ENCODE measurements at regions of chr1 and their contacts with region 1.

Region 1: DNA sequence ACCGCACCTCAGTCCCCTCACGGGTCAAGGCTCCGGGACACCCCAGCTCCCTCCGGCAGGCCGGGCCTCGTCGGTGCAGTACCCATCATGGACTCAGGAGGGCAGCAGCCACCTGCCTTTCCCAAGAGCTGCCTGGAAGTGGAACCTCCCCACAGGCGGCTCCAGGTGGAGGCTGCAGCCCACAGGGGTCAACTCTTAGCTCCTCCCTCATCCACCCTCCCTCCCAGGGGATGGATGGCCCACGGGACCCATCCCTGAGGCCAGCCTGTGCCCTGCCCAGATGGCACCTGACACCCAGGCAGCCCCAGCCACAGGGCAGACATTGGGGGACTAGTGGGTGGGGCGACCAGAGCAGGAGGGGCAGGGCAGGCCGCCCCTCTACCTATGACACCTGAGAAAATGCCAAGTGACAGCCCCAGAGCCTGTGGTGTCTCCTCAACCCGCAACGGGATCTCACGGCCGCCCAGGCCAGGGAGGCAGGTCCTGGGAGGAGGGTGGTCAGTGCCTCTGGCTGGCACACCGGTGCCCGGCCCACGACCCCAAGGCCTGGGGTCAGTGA is 1.2 kb upstream of the ARHGEF16 start:
- DNase-seq: peak; percentile 78
- H3K4me3 ChIP-seq: no peak overlapping the region
- H3K27ac ChIP-seq: no peak overlapping the region
- H3K4me1 ChIP-seq: peaks cover 17% of the 10 kb centered on the region
- H3K27me3 ChIP-seq: no peaks in the 10 kb centered on the region
- CTCF ChIP-seq: peak; percentile 91

Region 2: GRCh38 chr1:3471302-3472087 is 18.2 kb after region 1 on chr1:
- CTCF ChIA-PET with region 1: interaction called, 27 read pairs
- POLR2A ChIA-PET with region 1: no interaction called
- intact Hi-C with region 1: no loop called
- DNase-seq: peak; percentile 78
- H3K4me3 ChIP-seq: peak overlapping the region; percentile 22
- H3K27ac ChIP-seq: peak overlapping the region; percentile 80
- H3K4me1 ChIP-seq: peaks cover 37% of the 10 kb centered on the region
- H3K27me3 ChIP-seq: no peaks in the 10 kb centered on the region
- CTCF ChIP-seq: peak; percentile 62

Region 3: DNA sequence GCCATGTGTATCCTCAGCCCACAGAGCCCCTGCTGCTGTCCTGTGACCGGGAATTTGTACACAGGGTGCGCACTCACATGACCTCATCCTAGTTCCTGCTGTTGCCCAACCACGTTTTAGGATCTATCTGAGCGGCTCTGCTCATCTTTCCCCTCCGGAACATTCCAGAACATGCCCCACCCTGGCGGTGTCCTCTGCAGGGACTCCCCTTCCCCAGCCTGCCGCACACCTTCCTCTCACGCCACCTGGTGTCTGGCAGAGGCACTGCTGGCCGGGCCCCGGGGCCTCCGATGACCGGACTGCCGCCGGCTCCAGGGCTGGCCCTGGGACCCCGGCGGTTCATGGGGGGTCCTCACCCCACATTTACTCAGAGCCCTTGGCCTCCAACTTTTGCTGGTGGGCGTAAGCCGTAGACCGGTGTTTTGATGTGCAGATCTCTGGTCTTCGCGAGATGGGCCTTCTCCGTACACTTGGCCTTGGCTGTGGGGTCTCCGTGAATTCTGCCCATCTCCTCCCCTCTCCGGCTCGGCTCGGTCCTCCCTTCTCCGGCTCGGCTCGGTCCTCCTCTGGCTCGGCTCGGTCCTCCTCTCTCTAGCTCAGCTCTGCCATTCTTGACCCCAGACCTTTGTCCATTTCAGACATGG is 30.6 kb after region 1 on chr1:
- CTCF ChIA-PET with region 1: interaction called, 23 read pairs
- POLR2A ChIA-PET with region 1: no interaction called
- intact Hi-C with region 1: loop called (anchors 1 kb)
- DNase-seq: peak; percentile 53
- H3K4me3 ChIP-seq: no peak overlapping the region
- H3K27ac ChIP-seq: no peak overlapping the region
- H3K4me1 ChIP-seq: no peaks in the 10 kb centered on the region
- H3K27me3 ChIP-seq: no peaks in the 10 kb centered on the region
- CTCF ChIP-seq: peak; percentile 93

Region 4: GRCh38 chr1:3491291-3492246 is 38.3 kb after region 1 on chr1:
- CTCF ChIA-PET with region 1: interaction called, 13 read pairs
- POLR2A ChIA-PET with region 1: no interaction called
- intact Hi-C with region 1: no loop called
- DNase-seq: peak; percentile 79
- H3K4me3 ChIP-seq: no peak overlapping the region
- H3K27ac ChIP-seq: no peak overlapping the region
- H3K4me1 ChIP-seq: no peaks in the 10 kb centered on the region
- H3K27me3 ChIP-seq: no peaks in the 10 kb centered on the region
- CTCF ChIP-seq: peak; percentile 98

Region 5: GRCh38 chr1:3618881-3619671 is 165.8 kb after region 1 on chr1:
- CTCF ChIA-PET with region 1: interaction called, 42 read pairs
- POLR2A ChIA-PET with region 1: no interaction called
- intact Hi-C with region 1: loop called (anchors 2 kb)
- DNase-seq: peak; percentile 87
- H3K4me3 ChIP-seq: no peak overlapping the region
- H3K27ac ChIP-seq: no peak overlapping the region
- H3K4me1 ChIP-seq: peaks cover 5% of the 10 kb centered on the region
- H3K27me3 ChIP-seq: no peaks in the 10 kb centered on the region
- CTCF ChIP-seq: peak; percentile 91

Region 6: DNA sequence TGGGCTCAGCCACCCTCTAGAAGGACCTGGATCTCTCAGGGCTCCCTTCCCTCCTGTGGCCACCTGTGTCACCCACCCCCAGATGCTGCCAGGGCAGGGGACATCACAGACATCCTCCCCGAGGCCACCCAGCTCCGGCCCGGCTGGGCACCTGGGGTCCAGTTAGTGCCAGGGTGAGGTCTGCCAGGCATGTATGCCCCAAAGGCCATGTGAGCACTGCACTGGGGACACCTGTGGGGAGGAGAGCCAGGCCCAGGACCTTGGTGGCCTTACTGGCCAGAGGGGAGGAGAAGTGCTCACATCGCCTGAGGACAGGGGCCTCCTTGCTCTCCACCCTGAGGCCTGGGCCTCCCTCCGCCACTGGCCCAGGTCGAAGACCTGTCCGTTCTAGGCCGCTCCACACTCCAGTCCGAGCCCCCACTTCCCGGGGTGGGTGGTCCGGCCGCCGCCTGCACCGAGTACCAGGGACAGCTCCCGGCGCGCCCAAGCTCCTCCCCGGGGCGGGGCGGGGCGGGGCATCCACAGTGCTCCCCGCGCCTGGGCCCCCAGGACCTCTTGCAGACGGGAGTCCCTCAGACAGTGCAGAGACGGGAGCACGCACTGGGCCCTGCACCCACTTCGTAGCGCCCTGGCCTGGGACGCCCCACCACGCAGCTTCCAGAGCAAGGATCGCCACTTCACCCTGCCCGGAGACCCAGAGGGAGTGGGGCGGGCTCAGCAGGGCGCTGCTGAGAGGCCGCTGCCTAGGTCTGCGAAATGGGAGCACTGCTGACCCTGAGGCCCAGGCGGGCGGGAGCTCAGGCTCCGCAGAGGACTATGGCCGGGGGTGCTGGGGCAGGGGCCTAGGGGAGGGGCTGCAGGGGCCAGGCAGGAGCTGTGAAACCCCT is 264.7 kb after region 1 on chr1:
- CTCF ChIA-PET with region 1: no interaction called
- POLR2A ChIA-PET with region 1: no interaction called
- intact Hi-C with region 1: loop called (anchors 5 kb)
- DNase-seq: peak; percentile 54
- H3K4me3 ChIP-seq: no peak overlapping the region
- H3K27ac ChIP-seq: no peak overlapping the region
- H3K4me1 ChIP-seq: peaks cover 13% of the 10 kb centered on the region
- H3K27me3 ChIP-seq: no peaks in the 10 kb centered on the region
- CTCF ChIP-seq: no peak

Measured in A673 (cell line).